ENCODE measurements at regions of chr18 and their contacts with region 1.

Region 1: DNA sequence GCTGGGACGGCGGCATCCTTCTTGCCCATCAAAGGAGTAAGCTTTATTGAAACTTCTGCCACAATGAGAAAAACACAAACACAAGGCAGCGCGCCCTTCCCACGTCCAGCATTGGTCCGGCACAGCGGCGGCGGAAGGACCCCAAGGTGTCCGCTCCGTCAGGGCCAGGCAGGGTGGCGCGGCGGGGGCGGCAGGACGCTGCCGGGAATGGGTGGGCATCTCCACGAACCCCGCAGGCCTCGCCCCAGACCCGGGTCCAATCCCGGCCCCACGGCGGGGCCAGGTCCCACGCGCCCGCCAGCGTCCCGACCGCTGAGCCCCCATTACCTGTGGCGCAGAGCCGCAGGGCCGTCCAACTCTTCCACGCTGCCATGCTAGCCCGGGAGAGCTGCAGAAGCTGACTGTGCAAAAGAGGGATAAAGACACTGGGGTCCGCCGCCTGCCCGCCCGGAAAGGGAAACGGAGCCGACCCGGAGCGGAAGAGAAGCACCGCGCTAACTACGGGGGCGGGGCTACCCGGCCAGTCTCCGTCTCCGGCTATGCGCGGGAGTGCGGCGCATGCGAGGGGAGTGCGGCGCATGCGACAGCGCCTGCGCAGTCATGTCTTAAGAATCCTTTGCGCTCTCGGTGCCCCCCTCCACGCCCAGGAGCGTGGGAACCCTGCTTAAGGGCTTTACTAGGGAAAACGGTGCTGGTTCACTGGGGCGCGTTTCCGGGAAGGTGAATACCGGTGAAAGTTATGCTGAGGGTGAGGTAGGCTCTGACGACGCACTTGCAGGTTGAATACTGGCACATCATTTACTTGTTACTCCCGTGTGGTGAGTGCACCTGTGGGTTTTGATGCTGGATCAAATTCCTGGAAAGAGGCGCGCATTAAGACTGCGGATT is at the start of gene TMX3:
- DNase-seq: peak; percentile 86 to 94 (median 89)
- H3K4me3 ChIP-seq: peak within 1 kb of the TSS; percentile 85
- H3K27ac ChIP-seq: peak within 1 kb of the TSS in 1 of 2 donors; percentile 51
- H3K4me1 ChIP-seq: peaks cover 4% of the 10 kb centered on the region
- H3K27me3 ChIP-seq: no peaks in the 10 kb centered on the region
- CTCF ChIP-seq: no peak
- EP300 ChIP-seq: no peak
- POLR2A ChIP-seq: no peak
- total RNA-seq, gene TMX3: 19.5 to 41.9 (median 30.0) TPM

Region 2: GRCh38 chr18:68757126-68757525 is 42.3 kb after region 1 on chr18:
- intact Hi-C with region 1: loop called in 1 of 4 experiments (anchors 1 kb)
- DNase-seq: no peak
- H3K4me3 ChIP-seq: no peak overlapping the region
- H3K27ac ChIP-seq: no peak overlapping the region
- H3K4me1 ChIP-seq: no peaks in the 10 kb centered on the region
- H3K27me3 ChIP-seq: no peaks in the 10 kb centered on the region
- CTCF ChIP-seq: no peak
- EP300 ChIP-seq: no peak
- POLR2A ChIP-seq: no peak

Region 3: GRCh38 chr18:68779204-68779603 is 64.4 kb after region 1 on chr18:
- intact Hi-C with region 1: loop called in 1 of 4 experiments (anchors 2 kb)
- DNase-seq: no peak
- H3K4me3 ChIP-seq: no peak overlapping the region
- H3K27ac ChIP-seq: no peak overlapping the region
- H3K4me1 ChIP-seq: no peaks in the 10 kb centered on the region
- H3K27me3 ChIP-seq: no peaks in the 10 kb centered on the region
- CTCF ChIP-seq: no peak
- EP300 ChIP-seq: no peak
- POLR2A ChIP-seq: no peak

Measured in ovary (tissue), 10 donors.